ENCODE measurements at regions of chr6 and their contacts with region 1.

Region 1: GRCh38 chr6:36094753-36095496 is 35.4 kb upstream of the MAPK13 start:
- DNase-seq: peak; percentile 69
- CTCF ChIP-seq: peak; percentile 92

Region 2: DNA sequence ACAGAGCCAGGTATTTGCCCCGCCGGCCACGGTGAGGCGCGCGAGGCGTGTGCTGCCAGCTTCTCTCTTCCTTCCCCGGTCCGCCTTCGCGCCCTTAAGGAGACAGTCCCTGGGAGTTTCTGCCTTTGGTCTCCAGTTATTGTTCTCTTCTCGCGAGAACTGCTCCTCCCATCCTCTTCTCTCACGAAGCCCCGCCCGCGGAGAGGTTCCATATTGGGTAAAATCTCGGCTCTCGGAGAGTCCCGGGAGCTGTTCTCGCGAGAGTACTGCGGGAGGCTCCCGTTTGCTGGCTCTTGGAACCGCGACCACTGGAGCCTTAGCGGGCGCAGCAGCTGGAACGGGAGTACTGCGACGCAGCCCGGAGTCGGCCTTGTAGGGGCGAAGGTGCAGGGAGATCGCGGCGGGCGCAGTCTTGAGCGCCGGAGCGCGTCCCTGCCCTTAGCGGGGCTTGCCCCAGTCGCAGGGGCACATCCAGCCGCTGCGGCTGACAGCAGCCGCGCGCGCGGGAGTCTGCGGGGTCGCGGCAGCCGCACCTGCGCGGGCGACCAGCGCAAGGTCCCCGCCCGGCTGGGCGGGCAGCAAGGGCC is 67.3 kb before region 1 on chr6 and contains the start of gene MAPK14:
- CTCF ChIA-PET with region 1: interaction called, 157 read pairs
- POLR2A ChIA-PET with region 1: interaction called, 3 read pairs
- DNase-seq: peak; percentile 98
- CTCF ChIP-seq: peak; percentile 87

Region 3: DNA sequence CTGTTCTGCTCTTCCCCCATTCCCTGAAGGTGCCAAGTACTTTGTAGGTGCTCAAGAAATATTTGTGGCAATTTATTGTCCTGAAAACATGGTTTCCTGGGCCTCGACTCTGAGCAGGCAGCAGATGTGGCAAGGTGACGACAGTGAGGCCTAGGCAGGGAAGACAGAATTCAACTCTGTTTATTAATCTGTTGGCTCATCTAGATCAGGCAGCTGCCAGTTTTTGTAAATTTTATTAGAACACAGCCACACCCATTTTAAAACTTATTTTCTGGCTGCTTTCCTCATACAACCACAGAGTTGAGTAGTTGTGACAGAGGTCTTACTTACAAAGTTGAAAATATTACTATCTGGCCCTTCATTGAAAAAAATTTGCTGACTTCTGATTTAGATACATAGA is 42.8 kb before region 1 on chr6:
- CTCF ChIA-PET with region 1: interaction called, 13 read pairs
- POLR2A ChIA-PET with region 1: no interaction called
- DNase-seq: no peak
- CTCF ChIP-seq: no peak

Region 4: DNA sequence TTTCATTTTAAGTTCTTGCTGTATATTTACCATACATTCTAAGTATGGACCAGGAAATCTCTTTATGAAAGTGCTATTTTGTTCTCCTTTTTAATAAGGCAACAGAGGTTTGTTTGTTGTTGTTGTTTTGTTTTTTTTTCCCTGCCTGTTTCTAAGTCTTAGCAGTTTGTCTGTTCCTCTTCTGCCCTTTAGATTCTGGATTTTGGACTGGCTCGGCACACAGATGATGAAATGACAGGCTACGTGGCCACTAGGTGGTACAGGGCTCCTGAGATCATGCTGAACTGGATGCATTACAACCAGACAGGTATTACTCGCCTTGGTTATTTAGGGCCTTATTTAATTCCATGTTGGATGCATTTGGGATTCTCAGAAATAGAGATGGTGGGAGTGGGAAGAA is 19.3 kb before region 1 on chr6:
- CTCF ChIA-PET with region 1: interaction called, 42 read pairs
- POLR2A ChIA-PET with region 1: no interaction called
- DNase-seq: no peak
- CTCF ChIP-seq: peak; percentile 40

Region 5: DNA sequence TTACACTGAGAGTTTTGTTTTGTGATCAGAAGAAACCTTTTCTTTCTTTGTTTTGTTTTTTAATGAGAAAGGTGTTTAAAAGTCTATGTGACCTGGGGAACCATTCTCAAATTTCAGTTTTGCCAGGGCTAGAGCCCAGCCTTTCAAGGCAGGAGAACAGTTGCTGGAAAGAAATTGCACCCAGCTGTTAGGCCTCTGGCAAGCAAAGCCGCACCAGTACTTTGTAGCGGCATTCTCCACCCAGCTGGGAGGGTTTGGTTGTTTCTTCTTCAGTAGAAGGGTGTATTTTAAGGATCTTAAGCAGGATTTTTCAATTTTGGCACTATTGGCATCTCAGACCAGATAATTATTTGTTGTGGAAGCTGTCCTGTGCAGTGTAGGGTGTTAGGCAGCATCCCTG is 18.8 kb after region 1 on chr6:
- CTCF ChIA-PET with region 1: interaction called, 32 read pairs
- POLR2A ChIA-PET with region 1: no interaction called
- DNase-seq: no peak
- CTCF ChIP-seq: no peak

Region 6: DNA sequence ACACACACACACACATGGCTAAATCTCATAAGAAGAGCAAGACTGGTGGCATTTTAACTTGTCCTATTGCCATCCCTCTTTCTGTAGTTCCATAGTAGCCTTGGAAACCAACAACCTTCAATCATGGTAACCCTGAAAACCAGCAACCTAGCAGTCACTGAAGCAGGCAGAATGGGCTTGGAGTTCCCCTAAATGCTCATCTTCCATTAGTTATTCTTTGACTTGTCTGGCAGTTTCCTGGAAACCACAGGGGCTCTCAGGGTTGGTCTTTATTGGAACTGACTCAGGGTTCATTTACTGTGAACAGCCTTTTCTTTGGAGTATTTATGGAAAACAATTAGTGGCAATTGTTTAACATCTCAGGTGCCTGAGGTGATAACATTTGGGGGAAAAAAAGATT is 82.2 kb after region 1 on chr6:
- CTCF ChIA-PET with region 1: no interaction called
- POLR2A ChIA-PET with region 1: no interaction called
- DNase-seq: no peak
- CTCF ChIP-seq: no peak

Region 7: DNA sequence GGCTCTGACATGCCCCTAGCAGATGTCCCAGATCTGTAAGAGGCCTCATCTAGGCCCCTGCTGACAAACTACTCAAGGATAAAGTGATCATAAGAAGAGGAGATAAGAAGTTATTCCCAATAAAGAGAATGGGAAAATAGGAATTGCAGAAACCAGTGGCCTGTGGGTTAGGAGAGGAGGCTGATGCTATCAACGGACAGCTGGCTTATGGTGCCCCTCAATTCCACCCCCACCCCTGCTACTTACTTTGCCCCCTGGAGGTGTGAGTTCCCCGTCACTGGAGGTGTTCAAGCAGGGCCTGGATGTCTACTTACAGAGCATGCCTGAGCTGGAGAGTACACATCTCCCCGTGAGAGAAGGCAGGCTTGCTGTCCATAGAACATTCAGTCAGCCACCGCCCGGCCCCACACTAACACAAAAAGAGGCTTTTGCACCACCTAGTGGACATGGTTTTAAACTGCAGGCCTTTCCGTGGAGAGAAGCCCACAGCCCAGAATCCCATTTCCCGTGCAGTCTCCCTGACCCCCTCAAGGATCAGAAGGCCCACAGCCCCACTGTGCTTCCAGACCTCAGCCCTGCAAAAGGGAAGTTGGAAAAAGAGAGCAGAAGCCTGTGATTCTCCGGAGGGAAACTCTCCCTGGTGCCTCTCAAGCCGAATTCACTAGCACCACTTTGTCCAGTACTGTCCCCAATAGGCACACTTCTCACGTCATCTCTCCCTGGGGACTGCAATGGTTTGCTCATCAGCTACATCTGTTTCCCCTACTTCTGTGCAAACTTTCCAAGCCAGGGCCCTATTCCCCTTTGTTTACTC is 265.5 kb after region 1 on chr6:
- CTCF ChIA-PET with region 1: interaction called, 12 read pairs
- POLR2A ChIA-PET with region 1: no interaction called
- DNase-seq: peak; percentile 78
- CTCF ChIP-seq: peak; percentile 81